ENCODE measurements at regions of chr2 and their contacts with region 1.

Region 1: DNA sequence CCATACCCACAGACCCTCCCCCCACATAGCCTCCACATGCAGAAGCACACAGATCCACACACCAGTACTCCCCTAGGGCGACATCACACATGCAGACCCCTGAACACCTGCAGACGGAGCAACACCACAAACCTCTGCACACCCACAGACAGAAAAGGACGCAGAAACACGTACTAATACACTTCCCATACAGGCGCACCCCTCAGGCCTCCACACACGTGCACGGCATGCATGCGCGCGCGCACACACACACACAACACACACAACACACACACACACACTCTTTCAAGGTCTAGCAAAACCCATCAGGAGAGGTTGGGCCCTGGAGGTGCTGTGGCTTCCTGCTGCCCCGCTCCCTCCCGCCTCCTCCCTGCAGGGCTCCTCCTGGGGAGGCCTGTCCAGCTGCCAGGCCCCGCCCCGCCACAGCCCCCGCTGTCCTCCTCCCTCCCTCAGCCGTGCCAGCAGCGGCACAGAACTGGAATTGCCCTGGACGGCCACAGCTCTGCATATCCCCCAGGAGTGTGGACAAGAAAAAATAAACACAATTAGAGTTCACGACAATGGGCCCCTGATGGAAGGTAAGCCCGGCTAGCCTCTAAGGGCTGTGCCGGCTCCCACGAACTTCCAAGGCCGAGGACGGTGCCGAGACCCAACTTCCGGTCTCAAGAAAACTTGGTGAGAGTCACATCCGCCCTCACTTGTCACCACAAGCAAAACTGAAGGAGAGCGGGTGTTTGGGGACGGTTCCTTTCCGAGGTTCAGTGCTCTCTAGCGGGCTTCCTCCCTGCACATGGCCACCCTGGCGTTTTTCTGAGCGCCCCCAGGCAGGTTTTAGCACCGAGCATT is 6.8 kb downstream of the ZFP36L2 start:
- DNase-seq: peak; percentile 93

Region 2: GRCh38 chr2:43075054-43075593 is 144.5 kb before region 1 on chr2:
- intact Hi-C with region 1: loop called in 1 of 2 experiments (anchors 5 kb)
- DNase-seq: peak; percentile 95

Region 3: GRCh38 chr2:43127208-43127940 is 92.2 kb before region 1 on chr2:
- intact Hi-C with region 1: loop called in 1 of 2 experiments (anchors 10 kb)
- DNase-seq: peak; percentile 93

Region 4: DNA sequence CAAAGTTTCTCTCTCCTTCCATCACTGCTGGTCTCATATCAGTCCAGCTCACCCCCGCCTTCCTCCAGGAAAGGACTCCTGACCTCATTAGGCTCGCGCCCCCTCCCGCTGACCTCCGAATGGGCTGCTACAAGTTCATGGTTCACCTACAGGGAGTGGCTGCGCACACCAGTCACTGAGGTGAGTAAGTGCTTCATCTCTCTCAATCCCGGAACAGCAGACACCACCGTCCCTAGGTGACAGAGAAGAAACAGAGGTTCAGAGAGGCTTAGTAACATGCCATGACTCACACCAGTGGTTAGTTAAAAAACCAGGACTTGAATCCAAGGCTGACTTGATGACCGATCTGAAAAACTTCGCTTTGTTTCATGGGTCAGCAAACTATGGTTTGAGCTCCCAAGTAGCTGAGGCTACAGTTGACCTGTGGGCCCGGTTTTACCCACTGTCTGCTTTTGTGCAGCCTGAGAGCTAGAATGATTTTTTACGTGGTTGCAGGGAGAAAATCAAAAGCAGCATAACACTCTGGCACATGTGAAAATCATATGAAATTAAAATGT is 35.2 kb before region 1 on chr2:
- intact Hi-C with region 1: loop called in 1 of 2 experiments (anchors 5 kb)
- DNase-seq: no peak

Measured in posterior vena cava (tissue), 2 donors.